ENCODE measurements at regions of chr4 and their contacts with region 1.

Region 1: GRCh38 chr4:186021461-186022167 is 47.3 kb upstream of the TLR3 start:
- DNase-seq: peak; percentile 69
- H3K4me3 ChIP-seq: no peak overlapping the region
- H3K27ac ChIP-seq: no peak overlapping the region
- H3K4me1 ChIP-seq: no peaks in the 10 kb centered on the region
- H3K27me3 ChIP-seq: no peaks in the 10 kb centered on the region
- CTCF ChIP-seq: peak; percentile 73 to 82
- POLR2A ChIP-seq: no peak

Region 2: DNA sequence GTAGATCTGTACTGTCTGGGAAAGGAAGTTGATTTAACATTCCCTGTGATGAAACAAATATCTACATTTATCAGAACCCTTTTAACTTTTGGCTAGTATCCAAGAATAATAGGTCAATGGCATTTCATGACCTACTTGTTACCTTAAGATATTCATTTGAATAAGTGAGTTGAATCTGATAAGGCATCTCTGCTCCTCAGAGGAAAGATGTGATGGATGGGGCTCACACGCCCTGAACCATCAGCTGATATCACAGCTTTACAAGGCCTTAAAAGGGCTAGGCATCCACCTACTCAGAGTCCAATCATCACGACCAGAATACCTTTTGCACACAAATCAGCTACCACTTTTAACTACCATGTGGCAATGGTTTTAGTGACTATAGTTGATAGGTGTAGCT is 396.1 kb before region 1 on chr4:
- CTCF ChIA-PET with region 1: interaction called, 17 read pairs
- POLR2A ChIA-PET with region 1: no interaction called
- dilution Hi-C with region 1: loop called (anchors 25 kb)
- intact Hi-C with region 1: no loop called
- DNase-seq: peak; percentile 7
- H3K4me3 ChIP-seq: no peak overlapping the region
- H3K27ac ChIP-seq: no peak overlapping the region
- H3K4me1 ChIP-seq: no peaks in the 10 kb centered on the region
- H3K27me3 ChIP-seq: no peaks in the 10 kb centered on the region
- CTCF ChIP-seq: no peak
- POLR2A ChIP-seq: no peak

Region 3: GRCh38 chr4:185656467-185656931 is 365.1 kb before region 1 on chr4:
- CTCF ChIA-PET with region 1: interaction called, 59 read pairs
- POLR2A ChIA-PET with region 1: no interaction called
- dilution Hi-C with region 1: no loop called
- intact Hi-C with region 1: loop called (anchors 5 kb)
- DNase-seq: peak; percentile 61
- H3K4me3 ChIP-seq: peak overlapping the region in 1 of 3 experiments; percentile 5
- H3K27ac ChIP-seq: no peak overlapping the region
- H3K4me1 ChIP-seq: peaks cover 4% of the 10 kb centered on the region
- H3K27me3 ChIP-seq: no peaks in the 10 kb centered on the region
- CTCF ChIP-seq: peak; percentile 28 to 43
- POLR2A ChIP-seq: no peak

Region 4: DNA sequence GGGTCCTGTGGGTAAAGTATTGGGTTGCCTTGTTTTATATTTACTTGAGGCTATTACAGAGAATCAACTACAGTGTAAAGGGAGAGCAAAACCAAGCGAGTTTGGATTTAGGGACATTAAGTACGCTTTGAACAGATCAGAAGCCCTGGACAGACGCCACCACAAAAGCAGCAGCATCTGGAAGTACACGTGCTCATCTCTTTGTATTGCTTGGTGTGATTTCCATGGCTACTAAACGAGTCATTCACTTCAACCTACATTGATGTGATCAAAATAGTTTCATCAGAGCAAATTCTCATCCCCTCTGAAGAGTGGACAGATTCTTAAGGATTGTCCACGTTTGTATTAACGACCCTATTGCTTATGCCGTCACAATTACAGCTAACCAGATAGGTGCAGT is 294.7 kb before region 1 on chr4:
- CTCF ChIA-PET with region 1: interaction called, 6 read pairs
- POLR2A ChIA-PET with region 1: no interaction called
- dilution Hi-C with region 1: no loop called
- intact Hi-C with region 1: loop called (anchors 5 kb)
- DNase-seq: no peak
- H3K4me3 ChIP-seq: no peak overlapping the region
- H3K27ac ChIP-seq: no peak overlapping the region
- H3K4me1 ChIP-seq: peaks cover 32% of the 10 kb centered on the region
- H3K27me3 ChIP-seq: no peaks in the 10 kb centered on the region
- CTCF ChIP-seq: no peak
- POLR2A ChIP-seq: no peak

Region 5: GRCh38 chr4:185761352-185762235 is 260.0 kb before region 1 on chr4:
- CTCF ChIA-PET with region 1: interaction called, 13 read pairs
- POLR2A ChIA-PET with region 1: no interaction called
- dilution Hi-C with region 1: no loop called
- intact Hi-C with region 1: no loop called
- DNase-seq: peak; percentile 73
- H3K4me3 ChIP-seq: peak overlapping the region in 1 of 3 experiments; percentile 2
- H3K27ac ChIP-seq: peak overlapping the region; percentile 51
- H3K4me1 ChIP-seq: peaks cover 44% of the 10 kb centered on the region
- H3K27me3 ChIP-seq: no peaks in the 10 kb centered on the region
- CTCF ChIP-seq: no peak
- POLR2A ChIP-seq: no peak

Region 6: DNA sequence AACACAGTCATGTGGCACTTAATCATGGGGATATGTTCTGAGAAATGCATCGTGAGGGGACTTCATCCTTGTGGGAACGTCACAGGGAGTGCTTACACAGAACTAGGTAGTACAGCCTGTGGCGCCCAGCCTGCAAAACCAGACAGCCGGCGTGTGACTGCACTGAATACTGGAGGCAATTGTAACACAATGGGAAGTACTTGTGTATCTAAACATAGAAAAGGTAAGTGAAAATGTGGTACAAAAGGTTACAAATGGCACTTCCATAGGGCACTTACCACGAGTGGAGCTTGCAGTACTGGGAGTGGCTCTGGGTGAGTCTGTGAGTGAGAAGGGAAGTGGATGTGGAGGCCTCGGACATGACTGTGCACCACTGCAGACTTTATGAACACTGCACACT is 52.6 kb after region 1 on chr4:
- CTCF ChIA-PET with region 1: no interaction called
- POLR2A ChIA-PET with region 1: no interaction called
- dilution Hi-C with region 1: no loop called
- intact Hi-C with region 1: no loop called
- DNase-seq: no peak
- H3K4me3 ChIP-seq: no peak overlapping the region
- H3K27ac ChIP-seq: no peak overlapping the region
- H3K4me1 ChIP-seq: peaks cover 2% of the 10 kb centered on the region
- H3K27me3 ChIP-seq: no peaks in the 10 kb centered on the region
- CTCF ChIP-seq: no peak
- POLR2A ChIP-seq: no peak